ENCODE measurements at regions of chr15 and their contacts with region 1.

Region 1: DNA sequence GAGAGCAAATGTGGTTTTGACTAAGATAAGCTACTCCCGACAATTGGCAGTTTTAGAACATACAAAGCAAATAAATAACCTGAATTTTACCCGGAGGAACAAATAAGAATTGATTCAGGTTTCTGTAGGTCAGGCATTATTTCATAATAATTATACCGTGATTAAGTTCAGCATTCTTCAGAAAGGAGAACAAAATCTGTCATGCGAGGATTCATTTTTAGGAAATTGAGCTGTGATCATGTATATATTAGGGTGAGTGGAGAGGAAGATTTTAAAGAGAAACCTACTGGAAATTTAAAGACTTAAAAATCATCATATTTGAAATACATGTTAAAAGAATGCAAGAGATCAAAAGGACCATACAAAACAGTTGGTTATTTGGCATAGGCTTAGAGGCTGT is 20.5 kb downstream of the ZNF609 start:
- DNase-seq: no peak
- ATAC-seq: no peak
- H3K4me3 ChIP-seq: no peak overlapping the region
- H3K27ac ChIP-seq: no peak overlapping the region
- H3K4me1 ChIP-seq: peaks cover 0 to 26% (median 0%) of the 10 kb centered on the region in 12 donors
- H3K27me3 ChIP-seq: no peaks in the 10 kb centered on the region
- CTCF ChIP-seq: no peak
- POLR2A ChIP-seq: no peak

Region 2: DNA sequence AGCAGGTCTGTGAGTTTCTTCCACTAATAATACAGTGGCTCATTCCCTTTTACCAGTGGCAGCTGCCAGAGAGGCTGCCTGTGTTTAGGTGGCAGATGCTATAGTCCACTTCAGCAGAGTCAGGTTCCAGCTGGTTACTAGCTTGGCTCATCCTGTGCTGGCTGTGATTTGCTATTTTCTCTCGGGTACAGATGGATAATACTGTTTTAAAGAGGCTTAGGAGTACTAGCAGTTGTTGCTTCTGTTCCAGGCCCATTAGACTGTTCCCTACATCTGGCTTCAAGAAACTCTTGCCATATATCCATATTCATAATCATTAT is 20.5 kb after region 1 on chr15:
- intact Hi-C with region 1: loop called in 1 of 10 experiments (anchors 1 kb)
- DNase-seq: no peak
- ATAC-seq: peak in 2 of 4 donors; percentile 21 to 27
- H3K4me3 ChIP-seq: no peak overlapping the region
- H3K27ac ChIP-seq: peak overlapping the region in 1 of 12 donors; percentile 40
- H3K4me1 ChIP-seq: peaks cover 2 to 48% (median 28%) of the 10 kb centered on the region in 12 donors
- H3K27me3 ChIP-seq: no peaks in the 10 kb centered on the region
- CTCF ChIP-seq: no peak
- POLR2A ChIP-seq: no peak

Region 3: DNA sequence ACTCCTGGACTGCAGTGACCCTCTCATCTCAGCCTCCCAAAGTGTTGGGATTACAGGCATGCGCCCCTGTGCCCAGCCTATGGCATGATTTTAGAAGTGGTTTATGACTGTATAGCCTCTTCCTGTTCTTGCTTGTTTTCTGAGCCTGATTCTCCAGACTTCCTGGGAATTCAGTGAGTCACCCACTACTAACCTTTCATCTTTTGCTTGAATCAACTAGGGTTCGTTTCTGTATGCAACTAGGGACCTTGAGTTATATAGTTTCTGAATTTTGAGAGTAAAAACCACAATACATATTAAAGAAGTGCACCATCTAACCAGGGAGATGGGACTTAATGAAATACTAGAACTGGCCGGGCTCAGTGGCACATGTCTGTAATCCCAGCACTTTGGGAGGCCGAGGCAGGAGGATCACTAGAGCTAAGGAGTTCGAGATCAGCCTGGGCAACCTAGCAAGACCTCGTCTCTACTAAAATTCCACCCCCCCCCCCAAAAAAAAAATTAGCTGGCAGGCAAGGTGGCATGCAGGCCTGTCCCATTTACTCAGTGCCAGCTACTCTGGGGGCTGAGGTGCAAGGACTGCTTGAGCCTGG is 55.4 kb after region 1 on chr15:
- intact Hi-C with region 1: no loop called
- DNase-seq: no peak
- ATAC-seq: peak in 1 of 4 donors; percentile 34
- H3K4me3 ChIP-seq: no peak overlapping the region
- H3K27ac ChIP-seq: no peak overlapping the region
- H3K4me1 ChIP-seq: peaks cover 0 to 18% (median 0%) of the 10 kb centered on the region in 12 donors
- H3K27me3 ChIP-seq: no peaks in the 10 kb centered on the region
- CTCF ChIP-seq: no peak
- POLR2A ChIP-seq: no peak